ENCODE measurements at regions of chr2 and their contacts with region 1.

Region 1: DNA sequence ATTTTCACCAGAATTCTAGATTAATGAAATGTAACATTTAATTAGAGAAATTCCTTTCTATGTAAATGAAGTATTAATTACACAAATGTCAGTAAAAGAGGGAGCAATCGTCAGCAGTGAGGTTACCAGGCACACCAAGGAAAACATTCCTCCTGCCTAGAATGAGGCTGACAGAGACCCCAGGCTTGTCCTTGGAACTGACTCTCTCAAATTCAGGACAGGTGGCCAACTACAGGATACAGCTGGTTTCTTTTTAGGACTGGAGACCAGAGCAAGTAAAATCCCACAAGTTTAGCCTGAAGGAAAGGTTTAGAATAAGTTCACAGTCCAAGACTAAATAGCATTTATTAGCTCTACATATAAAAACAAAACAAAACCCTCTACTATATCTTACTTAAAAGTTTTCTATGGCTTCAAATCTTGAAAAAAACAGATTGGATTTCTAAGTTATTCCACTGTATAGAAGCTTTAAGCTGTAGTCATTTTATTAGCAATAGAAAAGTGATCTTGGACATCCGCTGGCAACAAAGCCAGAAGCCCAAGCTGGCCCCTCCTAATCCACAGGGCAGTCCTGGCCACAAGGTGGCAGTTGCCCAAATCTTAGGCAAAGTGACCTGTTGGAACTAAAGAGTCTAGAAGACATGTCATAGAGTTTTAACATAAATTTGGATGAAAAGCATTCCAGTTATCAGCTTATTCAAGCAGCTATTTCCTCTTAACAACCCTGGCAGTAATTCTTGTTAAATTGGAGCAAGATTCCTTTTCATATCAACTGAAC is 81.0 kb downstream of the SP3 start:
- DNase-seq: peak; percentile 32
- ATAC-seq: peak; percentile 59; the same call in 1 of the 2 replicates
- H3K4me3 ChIP-seq: no peak overlapping the region
- H3K27ac ChIP-seq: no peak overlapping the region
- H3K4me1 ChIP-seq: no peaks in the 10 kb centered on the region
- H3K27me3 ChIP-seq: peaks cover 12% of the 10 kb centered on the region
- CTCF ChIP-seq: peak; percentile 53
- POLR2A ChIP-seq: no peak
- RAD21 ChIP-seq: peak; percentile 54

Region 2: GRCh38 chr2:174326161-174327020 is 442.2 kb after region 1 on chr2:
- CTCF ChIA-PET with region 1: no interaction called
- POLR2A ChIA-PET with region 1: no interaction called
- dilution Hi-C with region 1: no loop called
- in situ Hi-C with region 1: no loop called
- intact Hi-C with region 1: loop called (anchors 5 kb)
- DNase-seq: no peak
- ATAC-seq: peak; percentile 35
- H3K4me3 ChIP-seq: peak overlapping the region; percentile 31
- H3K27ac ChIP-seq: no peak overlapping the region
- H3K4me1 ChIP-seq: peaks cover 4% of the 10 kb centered on the region; the same call in 1 of the 2 replicates
- H3K27me3 ChIP-seq: peaks cover 77% of the 10 kb centered on the region
- CTCF ChIP-seq: no peak
- POLR2A ChIP-seq: no peak
- RAD21 ChIP-seq: no peak